ENCODE measurements at regions of chr13 and their contacts with region 1.

Region 1: GRCh38 chr13:104571161-104571892 is 1505.1 kb upstream of the SLC10A2 start:
- DNase-seq: peak; percentile 60
- H3K4me3 Mint-ChIP-seq: no peak overlapping the region
- H3K27ac Mint-ChIP-seq: peak overlapping the region; percentile 47
- H3K4me1 Mint-ChIP-seq: peaks cover 8% of the 10 kb centered on the region
- H3K27me3 Mint-ChIP-seq: no peaks in the 10 kb centered on the region
- CTCF ChIP-seq: no peak

Region 2: GRCh38 chr13:104318121-104318520 is 253.2 kb before region 1 on chr13:
- CTCF ChIA-PET with region 1: no interaction called
- intact Hi-C with region 1: loop called (anchors 1 kb)
- DNase-seq: no peak
- H3K4me3 Mint-ChIP-seq: no peak overlapping the region
- H3K27ac Mint-ChIP-seq: no peak overlapping the region
- H3K4me1 Mint-ChIP-seq: no peaks in the 10 kb centered on the region
- H3K27me3 Mint-ChIP-seq: no peaks in the 10 kb centered on the region
- CTCF ChIP-seq: no peak

Region 3: DNA sequence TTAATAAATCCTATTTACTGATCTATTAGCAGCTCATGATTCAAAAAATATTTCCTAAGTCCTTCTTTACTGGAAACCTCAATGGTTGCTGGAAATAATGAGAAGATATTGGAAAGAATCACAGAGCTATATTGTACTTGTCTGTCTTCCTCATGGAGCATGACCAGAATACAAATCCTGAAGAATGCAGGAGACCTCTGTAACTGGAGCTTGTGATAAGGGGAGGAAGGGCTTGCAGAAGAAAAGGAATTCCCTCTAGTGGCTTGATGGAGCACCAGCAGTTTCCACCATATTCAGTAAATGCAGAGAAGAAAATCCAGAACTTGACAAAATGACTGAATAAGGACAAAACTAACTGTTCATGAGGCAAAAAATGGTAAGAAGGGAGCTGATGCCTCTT is 631.0 kb after region 1 on chr13:
- CTCF ChIA-PET with region 1: interaction called, 4 read pairs
- intact Hi-C with region 1: loop called (anchors 5 kb)
- DNase-seq: no peak
- H3K4me3 Mint-ChIP-seq: no peak overlapping the region
- H3K27ac Mint-ChIP-seq: no peak overlapping the region
- H3K4me1 Mint-ChIP-seq: no peaks in the 10 kb centered on the region
- H3K27me3 Mint-ChIP-seq: no peaks in the 10 kb centered on the region
- CTCF ChIP-seq: no peak

Region 4: DNA sequence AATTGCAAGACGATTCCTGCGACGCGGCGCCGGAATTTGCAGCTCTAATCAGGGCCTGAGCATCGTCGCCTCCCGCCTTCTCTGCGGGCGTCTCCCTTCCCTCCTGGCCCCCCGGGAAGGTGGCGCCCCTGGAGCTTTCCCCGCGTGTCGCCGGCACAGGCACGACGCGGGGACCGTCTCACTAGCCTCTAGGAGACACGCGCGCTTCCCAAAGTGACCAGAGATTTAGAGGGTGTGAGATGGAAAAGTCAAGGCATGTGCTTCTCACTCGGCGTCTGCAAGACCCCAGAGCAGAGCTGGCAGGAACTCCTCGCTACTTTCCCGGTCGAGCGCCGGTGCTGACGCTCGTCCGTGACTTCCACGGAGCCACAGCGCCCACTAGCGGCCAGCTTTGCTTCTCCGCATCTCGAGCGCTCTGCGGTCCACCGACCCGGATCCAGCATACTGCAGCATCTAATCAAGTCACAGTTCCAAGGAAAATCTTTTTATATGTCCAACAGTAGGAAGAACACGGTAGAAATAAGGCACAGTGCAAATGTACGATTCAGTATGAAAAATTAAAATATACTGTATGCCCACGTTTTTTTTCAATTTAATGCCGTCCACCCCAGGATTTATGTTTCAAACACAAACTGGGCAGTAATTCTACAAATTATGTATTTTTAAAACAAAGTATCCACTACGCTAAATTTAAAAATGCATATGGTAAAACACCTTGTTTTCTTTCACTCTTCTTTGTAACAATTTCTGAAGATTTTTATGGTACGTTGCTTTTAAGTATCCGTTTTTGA is 1965.1 kb after region 1 on chr13:
- CTCF ChIA-PET with region 1: no interaction called
- intact Hi-C with region 1: loop called (anchors 10 kb)
- DNase-seq: peak; percentile 67
- H3K4me3 Mint-ChIP-seq: peak overlapping the region; percentile 79
- H3K27ac Mint-ChIP-seq: peak overlapping the region; percentile 73
- H3K4me1 Mint-ChIP-seq: no peaks in the 10 kb centered on the region
- H3K27me3 Mint-ChIP-seq: no peaks in the 10 kb centered on the region
- CTCF ChIP-seq: peak; percentile 31

Measured in Calu3 (cell line).